Activated naive CD4-positive, alpha-beta T cell treated with anti-CD3 and anti-CD28 coated beads for 36 hours (primary cell): ENCODE measurements at regions of chr16 and their contacts with region 1.

Region 1: DNA sequence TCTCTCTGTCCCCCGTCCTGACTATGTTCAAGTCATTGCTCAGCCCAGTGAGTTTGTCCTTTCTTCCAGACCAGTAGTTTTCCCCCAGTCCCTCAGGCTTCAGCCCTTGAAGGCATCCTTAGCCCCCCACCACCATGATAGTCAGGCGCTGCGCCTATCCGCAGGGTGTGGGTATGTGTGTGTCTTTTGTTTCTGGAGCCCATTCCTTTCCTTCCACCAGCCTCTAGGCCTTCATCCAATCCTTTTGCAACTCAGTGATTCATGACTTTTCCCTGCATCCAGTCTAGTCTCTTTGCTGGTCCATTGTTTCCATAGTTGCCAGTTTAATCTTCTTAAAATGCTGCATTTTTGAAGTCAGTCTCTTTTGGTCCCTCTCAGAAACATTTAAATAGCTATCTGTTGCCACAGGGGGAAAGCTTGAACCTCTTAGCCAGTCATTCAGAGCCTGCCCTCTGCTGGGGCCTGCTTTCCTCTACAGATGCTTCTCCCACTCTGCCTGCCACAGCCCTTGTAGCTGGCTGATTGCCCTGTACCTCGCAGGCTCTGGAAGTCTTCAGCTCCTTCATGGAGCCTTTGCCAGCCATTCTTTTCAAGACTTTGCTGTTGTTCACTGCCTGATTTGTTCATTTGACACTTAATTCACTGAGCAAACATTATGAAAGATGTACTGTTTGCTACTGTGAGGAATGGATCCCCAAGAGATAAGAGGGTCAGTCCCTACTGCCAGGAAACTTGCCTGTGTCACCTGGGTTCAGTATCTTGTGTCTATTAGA is 55.9 kb upstream of the ADCY7 start:
- DNase-seq: peak; percentile 88
- H3K4me3 Mint-ChIP-seq: no peak overlapping the region
- H3K27ac Mint-ChIP-seq: peak overlapping the region; percentile 59
- H3K4me1 Mint-ChIP-seq: peaks cover 32% of the 10 kb centered on the region
- H3K27me3 Mint-ChIP-seq: no peaks in the 10 kb centered on the region

Region 2: GRCh38 chr16:49876716-49877129 is 333.7 kb before region 1 on chr16:
- CTCF ChIA-PET with region 1: no interaction called
- intact Hi-C with region 1: no loop called
- DNase-seq: peak; percentile 49
- H3K4me3 Mint-ChIP-seq: no peak overlapping the region
- H3K27ac Mint-ChIP-seq: no peak overlapping the region
- H3K4me1 Mint-ChIP-seq: no peaks in the 10 kb centered on the region
- H3K27me3 Mint-ChIP-seq: peaks cover 38% of the 10 kb centered on the region

Region 3: GRCh38 chr16:50121721-50122445 is 88.6 kb before region 1 on chr16:
- CTCF ChIA-PET with region 1: interaction called, 18 read pairs
- intact Hi-C with region 1: no loop called
- DNase-seq: peak; percentile 93
- H3K4me3 Mint-ChIP-seq: peak overlapping the region; percentile 22
- H3K27ac Mint-ChIP-seq: peak overlapping the region; percentile 75
- H3K4me1 Mint-ChIP-seq: peaks cover 20% of the 10 kb centered on the region
- H3K27me3 Mint-ChIP-seq: no peaks in the 10 kb centered on the region

Region 4: DNA sequence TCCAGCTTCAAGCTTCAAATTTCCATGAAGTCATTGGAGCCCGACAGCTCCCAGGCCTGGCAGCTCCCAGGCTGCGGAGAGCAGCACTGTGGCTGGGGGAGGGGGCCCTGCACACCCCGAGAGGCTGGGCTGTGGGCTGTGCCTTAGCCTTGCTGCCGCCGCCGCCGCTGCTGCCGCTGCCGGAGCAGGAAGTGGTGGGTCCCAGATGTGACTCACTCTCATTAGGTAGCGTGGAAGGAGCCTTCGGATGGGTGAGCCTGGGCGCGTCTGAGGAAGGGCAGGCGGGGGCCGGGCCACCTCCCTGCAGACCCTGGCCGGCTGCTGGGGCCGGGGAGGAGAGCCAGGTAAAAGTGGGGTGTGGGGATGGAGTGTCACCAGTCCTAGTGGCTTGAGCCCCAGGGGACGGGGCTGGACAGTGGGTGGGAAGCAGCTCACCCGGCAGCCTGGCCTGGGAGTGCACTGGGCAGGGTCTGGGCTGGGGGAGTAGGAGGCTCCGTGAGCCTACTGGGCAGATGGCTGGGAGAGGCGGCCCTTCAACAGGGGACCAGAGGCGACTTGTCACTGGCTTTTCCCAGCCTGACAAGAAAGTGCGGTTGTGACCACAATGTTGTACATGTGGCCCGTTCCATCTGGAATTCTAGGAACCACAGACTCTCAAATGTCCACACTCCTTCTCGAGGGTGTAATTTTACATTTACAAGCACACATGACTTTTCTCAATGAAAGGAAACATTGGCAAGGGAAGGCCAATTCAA is 56.1 kb after region 1 on chr16 and contains the start of gene ADCY7:
- CTCF ChIA-PET with region 1: no interaction called
- intact Hi-C with region 1: loop called (anchors 2 kb)
- DNase-seq: peak; percentile 91
- H3K4me3 Mint-ChIP-seq: peak within 1 kb of the TSS; percentile 86
- H3K27ac Mint-ChIP-seq: peak within 1 kb of the TSS; percentile 94
- H3K4me1 Mint-ChIP-seq: peaks cover 60% of the 10 kb centered on the region
- H3K27me3 Mint-ChIP-seq: peaks cover 3% of the 10 kb centered on the region
- total RNA-seq, gene ADCY7: 73.4 to 89.6 TPM

Region 5: GRCh38 chr16:50313596-50314478 is 103.4 kb after region 1 on chr16:
- CTCF ChIA-PET with region 1: no interaction called
- intact Hi-C with region 1: no loop called
- DNase-seq: peak; percentile 67
- H3K4me3 Mint-ChIP-seq: no peak overlapping the region
- H3K27ac Mint-ChIP-seq: peak overlapping the region; percentile 79
- H3K4me1 Mint-ChIP-seq: peaks cover 16% of the 10 kb centered on the region
- H3K27me3 Mint-ChIP-seq: no peaks in the 10 kb centered on the region

Region 6: GRCh38 chr16:50368410-50369132 is 158.1 kb after region 1 on chr16 and contains the start of gene BRD7:
- CTCF ChIA-PET with region 1: interaction called, 3 read pairs
- intact Hi-C with region 1: loop called (anchors 1 kb)
- DNase-seq: peak; percentile 62
- H3K4me3 Mint-ChIP-seq: peak within 1 kb of the TSS; percentile 96
- H3K27ac Mint-ChIP-seq: peak within 1 kb of the TSS; percentile 86
- H3K4me1 Mint-ChIP-seq: peaks cover 46% of the 10 kb centered on the region
- H3K27me3 Mint-ChIP-seq: no peaks in the 10 kb centered on the region
- total RNA-seq, gene BRD7: 96.7 to 101 TPM

Region 7: DNA sequence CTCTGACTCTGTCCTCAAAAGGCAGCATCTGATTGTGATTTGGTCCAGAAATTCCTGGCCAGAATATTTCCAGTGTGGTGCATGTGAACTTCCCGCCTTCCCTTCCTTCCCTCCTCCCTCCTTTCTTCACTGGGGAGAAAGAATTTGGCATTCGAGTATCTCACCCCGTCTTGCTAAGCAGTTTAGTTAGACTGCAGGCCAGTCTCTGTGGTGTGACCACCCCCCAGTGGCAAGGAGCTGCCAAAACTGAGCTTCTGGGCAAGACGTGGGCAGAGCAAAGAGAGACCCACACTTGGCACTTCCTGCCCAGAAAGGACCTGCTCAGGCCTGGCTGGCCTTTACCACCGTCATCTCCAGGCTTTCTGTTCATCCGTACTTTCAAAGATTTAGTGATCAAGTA is 434.3 kb after region 1 on chr16:
- CTCF ChIA-PET with region 1: interaction called, 3 read pairs
- intact Hi-C with region 1: loop called (anchors 5 kb)
- DNase-seq: peak; percentile 67
- H3K4me3 Mint-ChIP-seq: no peak overlapping the region
- H3K27ac Mint-ChIP-seq: no peak overlapping the region
- H3K4me1 Mint-ChIP-seq: peaks cover 2% of the 10 kb centered on the region
- H3K27me3 Mint-ChIP-seq: no peaks in the 10 kb centered on the region

Region 8: GRCh38 chr16:51175081-51175480 is 964.6 kb after region 1 on chr16:
- CTCF ChIA-PET with region 1: no interaction called
- intact Hi-C with region 1: no loop called
- DNase-seq: no peak
- H3K4me3 Mint-ChIP-seq: no peak overlapping the region
- H3K27ac Mint-ChIP-seq: no peak overlapping the region
- H3K4me1 Mint-ChIP-seq: no peaks in the 10 kb centered on the region
- H3K27me3 Mint-ChIP-seq: no peaks in the 10 kb centered on the region